Right ventricle myocardium superior (tissue), 1 donor: ENCODE measurements at regions of chr7 and their contacts with region 1.

Region 1: DNA sequence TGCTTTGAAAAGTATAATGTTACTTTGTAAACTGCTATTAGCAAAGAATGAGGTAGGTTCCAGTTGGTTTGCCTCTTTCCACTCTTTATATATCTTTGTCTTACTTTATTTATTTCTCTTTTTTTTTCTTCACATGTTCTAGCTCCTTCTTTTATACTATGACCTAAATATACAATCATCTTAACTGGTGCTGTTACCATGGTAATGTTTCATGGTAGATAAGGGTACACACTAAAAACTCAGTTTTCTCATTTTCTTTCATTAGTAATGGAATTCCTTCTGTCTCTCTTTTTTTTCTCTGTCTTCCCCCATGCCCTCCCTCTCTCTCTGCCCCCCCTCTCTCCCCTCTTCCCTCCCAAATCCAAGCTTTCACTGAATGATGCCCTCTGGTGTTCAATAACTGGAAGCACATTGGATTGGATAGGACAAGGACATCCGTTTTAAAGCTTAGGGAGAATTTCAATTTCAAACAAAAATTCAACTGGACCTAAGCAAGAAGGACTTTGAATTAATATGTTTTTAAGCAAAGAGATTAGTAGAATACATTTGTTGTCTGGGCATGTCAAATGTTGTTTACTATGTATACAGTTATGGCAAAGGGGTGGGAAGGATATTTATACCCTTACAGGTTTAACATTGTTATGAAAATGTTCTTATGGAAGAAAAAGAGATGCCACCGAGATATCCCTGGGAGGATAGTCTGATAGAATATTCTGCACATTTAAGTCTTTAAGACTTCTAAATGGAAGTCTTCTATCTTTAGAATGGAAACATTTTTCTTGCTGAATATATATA is 6.0 kb downstream of the CHRM2 start:
- DNase-seq: no peak
- ATAC-seq: no peak

Region 2: DNA sequence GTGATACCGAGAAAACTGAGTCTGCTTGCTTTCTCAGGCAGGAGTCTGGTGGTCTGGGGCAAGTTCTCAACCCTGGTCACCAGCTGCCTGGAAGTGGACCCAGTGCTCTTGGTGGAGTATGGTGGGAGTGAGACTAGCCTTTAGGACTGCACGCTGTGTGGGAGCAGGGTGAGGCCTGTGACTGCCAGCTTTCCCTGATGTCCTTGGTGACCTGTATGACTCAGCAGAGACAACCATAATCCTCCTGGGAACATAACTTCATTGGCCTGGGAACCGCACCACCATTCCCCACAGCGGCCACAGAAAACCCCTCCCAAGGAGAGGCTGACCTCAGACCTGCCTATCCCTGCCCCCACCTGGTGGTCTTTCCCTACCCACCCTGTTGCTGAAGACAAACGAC is 145.5 kb before region 1 on chr7:
- intact Hi-C with region 1: no loop called
- DNase-seq: no peak
- ATAC-seq: no peak

Region 3: GRCh38 chr7:137006293-137006692 is 131.9 kb after region 1 on chr7:
- intact Hi-C with region 1: loop called (anchors 10 kb)
- DNase-seq: no peak
- ATAC-seq: peak; percentile 85

Region 4: GRCh38 chr7:137081321-137082093 is 207.1 kb after region 1 on chr7:
- intact Hi-C with region 1: loop called (anchors 10 kb)
- DNase-seq: peak; percentile 84
- ATAC-seq: peak; percentile 95